Right ventricle myocardium inferior (tissue), 1 donor: ENCODE measurements at regions of chr13 and their contacts with region 1.

Region 1: GRCh38 chr13:86870444-86870843 is 800.7 kb upstream of the SLITRK5 start:
- DNase-seq: no peak
- ATAC-seq: no peak

Region 2: GRCh38 chr13:86840250-86841191 is 29.9 kb before region 1 on chr13:
- intact Hi-C with region 1: no loop called
- DNase-seq: peak; percentile 46
- ATAC-seq: peak; percentile 13

Region 3: GRCh38 chr13:87274209-87274819 is 403.9 kb after region 1 on chr13:
- intact Hi-C with region 1: loop called (anchors 5 kb)
- DNase-seq: no peak
- ATAC-seq: no peak